Psoas muscle (tissue), 8 donors: ENCODE measurements at regions of chr2 and their contacts with region 1.

Region 1: DNA sequence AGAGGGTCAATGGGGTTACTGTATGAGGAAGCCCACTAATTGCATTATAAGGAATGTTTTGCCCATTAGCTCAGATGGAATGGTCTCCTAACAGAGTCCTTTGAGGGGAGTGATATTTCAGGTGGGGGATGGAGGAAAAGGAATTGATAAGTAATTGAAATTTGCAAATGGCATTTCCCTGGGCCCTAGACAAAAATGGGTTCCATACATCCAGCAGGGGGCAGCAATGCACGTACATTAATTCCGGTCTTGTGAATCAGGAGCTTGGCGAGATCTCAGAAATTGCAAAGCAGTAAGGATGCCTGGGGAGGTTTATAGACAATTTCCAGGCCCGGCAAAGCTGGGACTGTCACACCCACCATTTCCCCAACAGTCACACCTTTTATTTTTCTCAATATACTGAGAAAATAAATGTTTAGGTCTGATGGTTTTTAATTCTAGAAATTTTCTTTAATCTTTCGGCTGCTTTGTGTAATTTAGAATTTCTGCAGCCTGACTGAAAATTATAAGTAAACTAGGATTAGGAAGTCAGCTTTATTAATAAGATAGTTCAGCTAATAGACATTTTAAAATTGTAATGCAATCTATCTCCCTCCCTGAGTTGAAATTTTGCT is 122.8 kb downstream of the LYPD1 start:
- DNase-seq: peak in 1 of 2 donors; percentile 33
- ATAC-seq: no peak
- H3K4me3 ChIP-seq: no peak overlapping the region
- H3K27ac ChIP-seq: no peak overlapping the region
- H3K4me1 ChIP-seq: no peaks in the 10 kb centered on the region
- H3K27me3 ChIP-seq: peaks cover 0 to 2% (median 0%) of the 10 kb centered on the region in 3 donors
- CTCF ChIP-seq: peak; percentile 52

Region 2: DNA sequence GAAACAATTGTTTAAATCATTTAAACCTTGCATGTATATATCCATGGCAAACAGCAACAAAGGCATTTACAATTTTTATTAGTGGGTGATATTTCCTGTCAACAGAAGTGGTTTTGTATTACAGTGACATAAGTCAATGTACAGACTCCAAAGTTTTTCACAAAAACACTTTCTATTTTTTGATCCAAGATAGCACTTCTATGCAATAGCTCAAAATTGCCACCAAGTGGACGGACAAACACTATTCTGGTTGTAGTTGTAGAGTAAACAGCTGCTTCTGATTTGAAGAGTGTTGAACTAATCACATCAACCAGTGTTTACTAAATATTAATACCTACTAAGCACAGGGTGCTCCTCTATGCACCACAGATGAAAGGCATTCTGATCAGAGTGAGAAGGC is 599.7 kb after region 1 on chr2:
- intact Hi-C with region 1: no loop called
- DNase-seq: no peak
- ATAC-seq: no peak
- H3K4me3 ChIP-seq: no peak overlapping the region
- H3K27ac ChIP-seq: no peak overlapping the region
- H3K4me1 ChIP-seq: no peaks in the 10 kb centered on the region
- H3K27me3 ChIP-seq: no peaks in the 10 kb centered on the region
- CTCF ChIP-seq: no peak

Region 3: GRCh38 chr2:133171393-133172004 is 624.3 kb after region 1 on chr2:
- intact Hi-C with region 1: loop called in 1 of 2 experiments (anchors 5 kb)
- DNase-seq: no peak
- ATAC-seq: no peak
- H3K4me3 ChIP-seq: no peak overlapping the region
- H3K27ac ChIP-seq: no peak overlapping the region
- H3K4me1 ChIP-seq: no peaks in the 10 kb centered on the region
- H3K27me3 ChIP-seq: peaks cover 0 to 2% (median 0%) of the 10 kb centered on the region in 3 donors
- CTCF ChIP-seq: peak; percentile 34

Region 4: DNA sequence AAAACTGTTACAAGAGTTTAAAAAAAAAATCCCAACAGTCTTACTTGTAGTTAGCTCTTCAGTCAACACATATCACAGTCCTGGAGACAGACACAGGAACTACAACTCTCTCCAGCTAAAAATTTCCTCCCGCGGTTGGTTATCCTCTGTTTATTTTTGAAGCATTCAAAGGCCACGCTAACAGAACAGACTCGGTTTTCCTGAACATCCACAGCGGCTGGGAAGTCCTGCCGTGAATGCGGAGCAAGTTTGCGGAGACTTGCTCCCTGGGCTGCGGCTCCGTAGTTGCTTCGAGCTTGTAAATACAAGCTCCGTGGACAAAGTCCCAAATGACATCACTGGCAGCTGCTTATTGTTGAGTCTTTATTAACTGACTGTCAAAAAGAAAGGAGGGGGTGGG is 1021.0 kb after region 1 on chr2 and contains the start of gene NCKAP5:
- intact Hi-C with region 1: loop called in 1 of 2 experiments (anchors 5 kb)
- DNase-seq: peak in 1 of 2 donors; percentile 44
- ATAC-seq: peak in 2 of 4 donors; percentile 38 to 44
- H3K4me3 ChIP-seq: peak within 1 kb of the TSS; percentile 43
- H3K27ac ChIP-seq: peak within 1 kb of the TSS; percentile 58
- H3K4me1 ChIP-seq: peaks cover 3% of the 10 kb centered on the region
- H3K27me3 ChIP-seq: peaks cover 0 to 3% (median 0%) of the 10 kb centered on the region in 3 donors
- CTCF ChIP-seq: no peak
- total RNA-seq, gene NCKAP5: 0.15 to 1.2 (median 0.55) TPM

Region 5: GRCh38 chr2:133844214-133844892 is 1297.2 kb after region 1 on chr2:
- intact Hi-C with region 1: loop called in 1 of 2 experiments (anchors 5 kb)
- DNase-seq: peak; percentile 35 to 68
- ATAC-seq: peak; percentile 56 to 83 (median 65)
- H3K4me3 ChIP-seq: no peak overlapping the region
- H3K27ac ChIP-seq: no peak overlapping the region
- H3K4me1 ChIP-seq: no peaks in the 10 kb centered on the region
- H3K27me3 ChIP-seq: no peaks in the 10 kb centered on the region
- CTCF ChIP-seq: peak; percentile 85